ENCODE measurements at regions of chr5 and their contacts with region 1.

Region 1: DNA sequence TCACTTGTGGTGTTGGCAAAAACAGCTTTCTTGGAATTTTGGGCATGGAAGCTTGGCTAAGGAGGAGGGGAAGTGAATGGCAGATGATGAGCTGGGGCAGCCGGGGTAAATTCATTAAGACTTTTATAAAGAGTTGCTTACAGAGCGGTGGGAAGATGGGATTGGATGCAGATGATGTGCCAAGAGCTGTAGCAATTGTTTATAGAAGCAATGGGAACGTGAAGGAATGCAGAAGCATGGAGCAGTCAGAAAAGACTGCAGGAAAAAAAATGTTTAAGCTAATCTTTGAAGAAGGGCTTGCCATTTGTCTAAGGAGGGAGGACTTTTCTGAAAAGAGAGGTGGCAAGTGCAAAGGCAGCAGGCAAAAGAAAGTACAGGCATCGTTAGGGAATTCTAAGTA is 86.6 kb upstream of the SHISAL2B start:
- DNase-seq: no peak
- ATAC-seq: no peak
- H3K4me3 ChIP-seq: no peak overlapping the region
- H3K27ac ChIP-seq: no peak overlapping the region
- H3K4me1 ChIP-seq: no peaks in the 10 kb centered on the region
- H3K27me3 ChIP-seq: no peaks in the 10 kb centered on the region
- CTCF ChIP-seq: no peak

Region 2: GRCh38 chr5:64451551-64451950 is 152.1 kb before region 1 on chr5:
- intact Hi-C with region 1: loop called in 1 of 2 experiments (anchors 10 kb)
- DNase-seq: no peak
- ATAC-seq: no peak
- H3K4me3 ChIP-seq: no peak overlapping the region
- H3K27ac ChIP-seq: no peak overlapping the region
- H3K4me1 ChIP-seq: no peaks in the 10 kb centered on the region
- H3K27me3 ChIP-seq: no peaks in the 10 kb centered on the region
- CTCF ChIP-seq: no peak

Region 3: GRCh38 chr5:64746446-64746845 is 142.8 kb after region 1 on chr5:
- intact Hi-C with region 1: loop called in 1 of 2 experiments (anchors 1 kb)
- DNase-seq: no peak
- ATAC-seq: no peak
- H3K4me3 ChIP-seq: no peak overlapping the region
- H3K27ac ChIP-seq: no peak overlapping the region
- H3K4me1 ChIP-seq: peaks cover 16% of the 10 kb centered on the region
- H3K27me3 ChIP-seq: no peaks in the 10 kb centered on the region
- CTCF ChIP-seq: no peak

Region 4: GRCh38 chr5:64883912-64884311 is 280.2 kb after region 1 on chr5:
- intact Hi-C with region 1: no loop called
- DNase-seq: no peak
- ATAC-seq: no peak
- H3K4me3 ChIP-seq: no peak overlapping the region
- H3K27ac ChIP-seq: no peak overlapping the region
- H3K4me1 ChIP-seq: no peaks in the 10 kb centered on the region
- H3K27me3 ChIP-seq: no peaks in the 10 kb centered on the region
- CTCF ChIP-seq: no peak